MCF 10A (cell line): ENCODE measurements at regions of chr4 and their contacts with region 1.

Region 1: DNA sequence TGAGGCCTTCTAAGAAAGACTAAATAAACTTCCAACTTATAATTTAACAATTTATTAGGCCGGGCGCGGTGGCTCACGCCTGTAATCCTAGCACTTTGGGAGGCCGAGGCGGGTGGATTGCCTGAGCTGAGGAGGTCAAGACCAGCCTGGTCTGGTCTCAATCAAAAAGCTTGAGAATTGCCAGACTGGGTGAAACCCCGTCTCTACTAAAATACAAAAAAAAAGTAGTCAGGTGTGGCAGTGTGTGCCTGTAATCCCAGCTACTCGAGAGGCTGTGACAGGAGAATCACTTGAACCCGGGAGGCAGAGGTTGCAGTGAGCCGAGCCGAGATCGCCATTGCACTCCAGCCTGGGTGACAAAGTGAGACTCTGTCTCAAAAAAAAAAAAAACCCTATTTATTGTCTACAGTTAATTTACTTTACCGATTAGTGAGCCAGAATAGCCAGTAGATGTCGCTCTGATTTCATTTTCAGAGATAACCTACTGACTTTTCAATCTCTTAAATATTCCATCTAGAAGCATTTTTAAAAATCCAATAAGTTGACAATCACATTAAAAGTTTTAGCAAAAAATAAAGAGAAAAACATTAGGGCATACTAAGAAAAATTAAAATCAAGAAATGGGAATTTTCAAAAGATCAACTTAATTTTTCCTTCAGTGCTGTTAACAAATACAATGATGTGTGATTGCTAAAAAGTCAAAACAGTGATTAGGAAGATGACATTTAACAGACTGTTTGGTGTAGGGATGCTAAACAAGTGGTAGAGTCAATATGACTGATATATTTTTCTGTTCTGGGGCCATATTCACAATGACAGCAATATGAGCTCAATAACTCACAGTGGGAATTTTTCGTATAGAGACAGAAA is 4.3 kb upstream of the SHROOM3 start:
- DNase-seq: peak; percentile 66
- H3K4me3 Mint-ChIP-seq: no peak overlapping the region
- H3K27ac Mint-ChIP-seq: no peak overlapping the region
- H3K4me1 Mint-ChIP-seq: peaks cover 19% of the 10 kb centered on the region
- H3K27me3 Mint-ChIP-seq: no peaks in the 10 kb centered on the region
- CTCF ChIP-seq: peak; percentile 75

Region 2: GRCh38 chr4:76108467-76109181 is 322.1 kb before region 1 on chr4:
- CTCF ChIA-PET with region 1: no interaction called
- POLR2A ChIA-PET with region 1: no interaction called
- intact Hi-C with region 1: no loop called
- DNase-seq: peak; percentile 68
- H3K4me3 Mint-ChIP-seq: no peak overlapping the region
- H3K27ac Mint-ChIP-seq: no peak overlapping the region
- H3K4me1 Mint-ChIP-seq: no peaks in the 10 kb centered on the region
- H3K27me3 Mint-ChIP-seq: no peaks in the 10 kb centered on the region
- CTCF ChIP-seq: no peak

Region 3: GRCh38 chr4:76305971-76306881 is 124.5 kb before region 1 on chr4 and contains the start of gene STBD1:
- CTCF ChIA-PET with region 1: interaction called, 29 read pairs
- POLR2A ChIA-PET with region 1: interaction called, 14 read pairs
- intact Hi-C with region 1: loop called (anchors 5 kb)
- DNase-seq: peak; percentile 73
- H3K4me3 Mint-ChIP-seq: peak within 1 kb of the TSS; percentile 94
- H3K27ac Mint-ChIP-seq: peak within 1 kb of the TSS; percentile 66
- H3K4me1 Mint-ChIP-seq: peaks cover 39% of the 10 kb centered on the region
- H3K27me3 Mint-ChIP-seq: no peaks in the 10 kb centered on the region
- CTCF ChIP-seq: no peak
- total RNA-seq, gene STBD1: 3.7 and 5.7 TPM in 2 replicates

Region 4: DNA sequence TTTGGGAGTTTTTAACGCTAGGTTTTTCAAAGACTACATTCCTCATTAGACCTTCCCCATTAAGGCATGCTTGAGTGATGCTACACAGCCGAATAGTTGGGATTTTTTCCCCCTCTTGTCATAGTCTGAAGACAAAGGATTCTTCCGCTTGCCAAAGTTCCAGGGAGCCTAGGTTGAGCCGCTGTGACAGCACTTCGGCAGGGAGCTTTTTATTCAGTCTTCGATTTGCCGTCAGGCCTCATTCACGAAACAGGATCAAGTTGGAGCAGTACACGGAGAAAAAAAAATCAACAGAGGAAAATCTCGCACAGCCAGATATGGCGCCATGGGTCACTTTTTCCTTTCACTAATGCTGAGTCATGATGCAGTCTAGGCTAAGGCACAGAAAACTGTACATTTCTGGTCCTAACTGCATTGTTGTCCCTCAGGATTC is 28.6 kb after region 1 on chr4:
- CTCF ChIA-PET with region 1: no interaction called
- POLR2A ChIA-PET with region 1: interaction called, 24 read pairs
- intact Hi-C with region 1: no loop called
- DNase-seq: peak; percentile 47
- H3K4me3 Mint-ChIP-seq: peak overlapping the region; percentile 32
- H3K27ac Mint-ChIP-seq: peak overlapping the region; percentile 90
- H3K4me1 Mint-ChIP-seq: peaks cover 19% of the 10 kb centered on the region
- H3K27me3 Mint-ChIP-seq: no peaks in the 10 kb centered on the region
- CTCF ChIP-seq: no peak

Region 5: GRCh38 chr4:76504613-76505465 is 74.1 kb after region 1 on chr4:
- CTCF ChIA-PET with region 1: interaction called, 294 read pairs
- POLR2A ChIA-PET with region 1: interaction called, 76 read pairs
- intact Hi-C with region 1: loop called (anchors 1 kb)
- DNase-seq: peak; percentile 75
- H3K4me3 Mint-ChIP-seq: no peak overlapping the region
- H3K27ac Mint-ChIP-seq: no peak overlapping the region
- H3K4me1 Mint-ChIP-seq: no peaks in the 10 kb centered on the region
- H3K27me3 Mint-ChIP-seq: no peaks in the 10 kb centered on the region
- CTCF ChIP-seq: peak; percentile 70

Region 6: GRCh38 chr4:76607266-76607799 is 176.6 kb after region 1 on chr4:
- CTCF ChIA-PET with region 1: no interaction called
- POLR2A ChIA-PET with region 1: no interaction called
- intact Hi-C with region 1: no loop called
- DNase-seq: no peak
- H3K4me3 Mint-ChIP-seq: no peak overlapping the region
- H3K27ac Mint-ChIP-seq: no peak overlapping the region
- H3K4me1 Mint-ChIP-seq: peaks cover 12% of the 10 kb centered on the region
- H3K27me3 Mint-ChIP-seq: no peaks in the 10 kb centered on the region
- CTCF ChIP-seq: no peak

Region 7: GRCh38 chr4:76748649-76749048 is 317.9 kb after region 1 on chr4:
- CTCF ChIA-PET with region 1: interaction called, 3 read pairs
- POLR2A ChIA-PET with region 1: interaction called, 4 read pairs
- intact Hi-C with region 1: loop called (anchors 5 kb)
- DNase-seq: peak; percentile 57
- H3K4me3 Mint-ChIP-seq: no peak overlapping the region
- H3K27ac Mint-ChIP-seq: no peak overlapping the region
- H3K4me1 Mint-ChIP-seq: peaks cover 25% of the 10 kb centered on the region
- H3K27me3 Mint-ChIP-seq: no peaks in the 10 kb centered on the region
- CTCF ChIP-seq: peak; percentile 7

Region 8: GRCh38 chr4:77044461-77045150 is 613.9 kb after region 1 on chr4:
- CTCF ChIA-PET with region 1: interaction called, 5 read pairs
- POLR2A ChIA-PET with region 1: no interaction called
- intact Hi-C with region 1: loop called (anchors 10 kb)
- DNase-seq: peak; percentile 47
- H3K4me3 Mint-ChIP-seq: peak overlapping the region; percentile 30
- H3K27ac Mint-ChIP-seq: peak overlapping the region; percentile 82
- H3K4me1 Mint-ChIP-seq: peaks cover 20% of the 10 kb centered on the region
- H3K27me3 Mint-ChIP-seq: no peaks in the 10 kb centered on the region
- CTCF ChIP-seq: peak; percentile 44